Right ventricle myocardium superior (tissue), 1 donor: ENCODE measurements at regions of chr17 and their contacts with region 1.

Region 1: DNA sequence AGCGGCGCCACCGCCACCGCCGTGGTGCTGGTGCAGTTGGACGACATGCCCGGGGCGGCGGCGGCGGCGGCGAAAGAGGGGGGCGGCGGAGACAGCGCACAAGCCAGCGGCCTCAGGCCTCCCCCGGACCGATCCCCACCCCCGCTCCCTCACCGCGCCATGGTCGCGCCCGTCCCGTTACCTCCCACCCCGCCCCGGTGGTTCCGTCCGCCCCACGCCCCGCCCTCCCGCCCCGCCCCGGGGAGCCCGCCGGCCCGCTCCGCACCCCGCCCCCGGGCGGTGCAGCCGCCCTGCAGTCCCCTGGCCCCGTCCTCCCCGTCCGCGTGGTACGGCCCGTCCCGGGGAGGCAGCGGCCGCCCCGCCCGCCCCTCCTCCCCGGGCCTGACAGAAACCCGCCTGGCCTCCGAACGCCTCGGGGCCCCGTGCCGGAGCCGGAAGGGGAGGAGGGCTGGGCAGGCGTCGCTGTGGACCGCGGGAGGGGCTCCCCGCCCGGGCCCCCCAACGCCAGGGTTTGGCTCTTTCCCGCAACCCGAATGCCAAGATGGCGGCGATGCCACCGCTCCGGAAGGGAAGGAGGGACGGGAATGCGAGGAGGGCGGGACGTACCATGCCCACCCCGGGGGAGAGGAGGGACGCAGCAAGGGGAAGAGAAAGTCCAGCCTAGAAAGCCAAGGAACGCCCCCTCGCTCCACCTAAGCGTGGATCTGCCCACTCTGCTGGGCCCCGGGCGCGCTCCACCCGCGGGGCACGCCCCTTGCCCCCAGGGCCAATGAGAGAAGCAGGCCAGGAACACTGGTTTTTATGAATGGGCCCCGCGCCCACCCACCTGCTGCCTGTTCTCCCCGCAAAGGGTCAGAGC is at the start of gene PIP4K2B:
- DNase-seq: peak; percentile 97
- ATAC-seq: peak; percentile 96
- total RNA-seq, gene PIP4K2B: 41.9 TPM

Region 2: DNA sequence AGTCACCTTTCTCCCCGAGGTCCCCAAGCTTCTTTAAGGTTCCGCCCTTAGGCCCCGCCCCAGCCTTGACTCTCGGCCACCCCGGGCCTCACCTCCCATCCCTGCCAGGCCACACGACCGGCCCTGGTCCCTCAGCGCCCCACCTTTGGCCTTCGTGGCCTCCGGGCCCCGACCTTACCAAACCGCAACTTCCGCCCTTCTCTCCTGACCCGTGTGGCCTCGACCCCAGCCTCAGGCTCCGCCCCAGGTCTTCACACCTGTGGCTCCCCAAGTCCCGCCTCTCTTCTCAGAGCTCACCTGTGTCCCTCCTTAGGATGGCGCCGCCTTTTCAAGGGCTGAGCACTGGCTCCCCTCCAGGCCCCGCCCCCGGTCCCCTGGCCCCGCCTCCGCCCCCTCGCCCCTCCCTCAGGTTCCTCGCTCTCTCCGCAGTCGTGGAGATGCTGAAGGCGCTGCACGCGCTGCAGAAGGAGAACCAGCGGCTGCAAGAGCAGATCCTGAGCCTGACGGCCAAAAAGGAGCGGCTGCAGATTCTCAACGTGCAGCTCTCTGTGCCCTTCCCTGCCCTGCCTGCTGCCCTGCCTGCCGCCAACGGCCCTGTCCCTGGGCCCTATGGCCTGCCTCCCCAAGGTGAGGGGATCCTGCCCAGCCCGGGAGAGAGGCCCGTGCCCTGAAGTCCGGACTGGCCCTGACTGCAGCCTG is 79.5 kb before region 1 on chr17:
- intact Hi-C with region 1: no loop called
- DNase-seq: no peak
- ATAC-seq: no peak

Region 3: GRCh38 chr17:38752119-38752929 is 47.3 kb before region 1 on chr17 and contains the start of gene PSMB3:
- intact Hi-C with region 1: loop called (anchors 5 kb)
- DNase-seq: peak; percentile 96
- ATAC-seq: peak; percentile 85
- total RNA-seq, gene PSMB3: 154 TPM

Region 4: GRCh38 chr17:38861399-38861843 is 61.8 kb after region 1 on chr17:
- intact Hi-C with region 1: no loop called
- DNase-seq: no peak
- ATAC-seq: no peak